Cardiac septum (tissue), 1 donor: ENCODE measurements at regions of chr5 and their contacts with region 1.

Region 1: DNA sequence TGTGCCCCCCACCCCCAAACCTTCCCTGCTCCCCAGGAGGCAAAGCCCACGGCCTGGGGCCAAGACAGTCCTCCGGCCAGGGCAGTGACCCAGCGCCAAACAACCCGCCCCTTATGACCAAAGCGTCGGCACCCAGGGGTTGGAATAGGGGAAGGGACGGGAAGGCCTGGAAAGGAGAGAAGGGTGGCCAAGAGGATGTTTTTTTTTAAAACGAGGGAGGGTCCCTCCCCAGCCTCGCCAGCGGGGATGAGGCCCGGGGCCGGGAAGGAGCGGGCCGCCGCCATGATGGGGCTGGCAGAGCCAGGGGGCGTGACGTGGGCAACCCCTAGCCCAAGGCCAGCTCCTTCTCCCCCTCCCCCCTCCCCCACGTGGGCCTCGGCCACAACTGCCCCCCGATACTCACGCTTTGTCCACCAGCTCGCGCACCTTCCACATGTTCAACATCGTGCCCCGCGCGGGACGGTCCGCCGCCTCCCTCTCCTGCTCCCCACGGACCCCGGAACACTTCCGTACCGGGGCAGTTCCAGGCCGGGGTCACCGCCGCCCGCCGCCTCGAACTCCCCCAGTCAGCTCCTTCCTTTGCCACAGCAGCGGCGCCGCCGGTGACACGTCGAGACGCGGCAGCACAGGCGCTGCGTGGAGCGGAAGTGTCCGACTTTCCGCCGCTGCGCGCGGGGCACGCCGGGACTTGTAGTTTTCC is at the start of gene CLINT1:
- DNase-seq: peak; percentile 97
- total RNA-seq, gene CLINT1: 53.0 TPM

Region 2: GRCh38 chr5:157917899-157918809 is 59.5 kb after region 1 on chr5:
- intact Hi-C with region 1: loop called (anchors 5 kb)
- DNase-seq: no peak